ENCODE measurements at regions of chr12 and their contacts with region 1.

Region 1: GRCh38 chr12:4107436-4107878 is 166.1 kb upstream of the CCND2 start:
- DNase-seq: peak; percentile 75
- H3K4me3 Mint-ChIP-seq: peak overlapping the region; percentile 59
- H3K27ac Mint-ChIP-seq: peak overlapping the region; percentile 94
- H3K4me1 Mint-ChIP-seq: peaks cover 58% of the 10 kb centered on the region
- H3K27me3 Mint-ChIP-seq: peaks cover 4% of the 10 kb centered on the region

Region 2: DNA sequence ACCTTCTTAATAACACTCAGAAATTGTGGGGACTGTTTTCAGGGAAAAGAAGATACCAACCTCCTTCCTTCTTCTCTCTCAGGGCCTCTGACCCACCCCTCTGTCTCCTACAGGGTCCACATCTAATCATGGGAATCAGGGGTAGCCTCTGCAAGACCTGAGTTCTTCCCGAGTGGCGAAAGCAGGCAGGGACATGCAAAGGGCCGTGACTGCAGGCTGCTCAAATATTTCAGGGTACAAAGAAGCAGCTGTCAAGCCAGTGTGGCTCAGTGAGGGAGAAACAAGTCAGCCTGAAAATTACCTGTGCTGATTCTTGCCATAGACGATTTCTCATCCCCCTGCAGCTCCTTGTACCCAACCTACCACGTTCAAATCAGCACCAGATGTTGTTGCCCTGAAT is 111.1 kb before region 1 on chr12:
- intact Hi-C with region 1: loop called (anchors 2 kb)
- DNase-seq: no peak
- H3K4me3 Mint-ChIP-seq: no peak overlapping the region
- H3K27ac Mint-ChIP-seq: no peak overlapping the region
- H3K4me1 Mint-ChIP-seq: peaks cover 16% of the 10 kb centered on the region
- H3K27me3 Mint-ChIP-seq: peaks cover 14% of the 10 kb centered on the region

Region 3: DNA sequence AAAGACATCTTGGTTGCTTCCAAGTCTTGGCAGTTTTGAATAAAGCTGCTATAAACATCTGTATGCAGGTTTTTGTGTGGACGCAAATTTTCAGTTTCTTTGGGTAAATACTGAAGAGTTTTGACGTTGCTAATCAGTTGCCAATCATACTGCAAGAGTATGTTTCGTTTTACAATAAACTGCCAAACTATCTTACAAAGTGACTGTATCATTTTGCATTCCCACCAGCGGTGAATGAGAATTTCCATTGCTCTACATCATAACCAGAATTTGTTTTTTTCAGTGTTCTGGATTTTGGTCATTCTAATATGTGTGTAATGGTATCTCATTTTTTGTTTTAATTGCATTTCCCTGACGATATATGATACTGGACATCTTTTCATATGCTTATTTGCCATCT is 43.4 kb before region 1 on chr12:
- intact Hi-C with region 1: loop called (anchors 5 kb)
- DNase-seq: no peak
- H3K4me3 Mint-ChIP-seq: no peak overlapping the region
- H3K27ac Mint-ChIP-seq: peak overlapping the region; percentile 18
- H3K4me1 Mint-ChIP-seq: peaks cover 8% of the 10 kb centered on the region
- H3K27me3 Mint-ChIP-seq: no peaks in the 10 kb centered on the region

Region 4: GRCh38 chr12:4153343-4153892 is 46.0 kb after region 1 on chr12:
- intact Hi-C with region 1: loop called (anchors 1 kb)
- DNase-seq: peak; percentile 78
- H3K4me3 Mint-ChIP-seq: peak overlapping the region; percentile 63
- H3K27ac Mint-ChIP-seq: peak overlapping the region; percentile 94
- H3K4me1 Mint-ChIP-seq: peaks cover 88% of the 10 kb centered on the region
- H3K27me3 Mint-ChIP-seq: no peaks in the 10 kb centered on the region

Measured in activated T-helper 1 cell treated with anti-CD3 and anti-CD28 coated beads, Interleukin-12 subunit alpha, Interleukin-12 subunit beta, Interleukin-2, Interleukin-4 antibody, amounts not matched to agents 30 ng/mL and 10 ng/mL and 1 ng/mL, durations not matched to agents 14 hours and 24 hours and 36 hours (primary cell).